ENCODE measurements at regions of chr10 and their contacts with region 1.

Region 1: DNA sequence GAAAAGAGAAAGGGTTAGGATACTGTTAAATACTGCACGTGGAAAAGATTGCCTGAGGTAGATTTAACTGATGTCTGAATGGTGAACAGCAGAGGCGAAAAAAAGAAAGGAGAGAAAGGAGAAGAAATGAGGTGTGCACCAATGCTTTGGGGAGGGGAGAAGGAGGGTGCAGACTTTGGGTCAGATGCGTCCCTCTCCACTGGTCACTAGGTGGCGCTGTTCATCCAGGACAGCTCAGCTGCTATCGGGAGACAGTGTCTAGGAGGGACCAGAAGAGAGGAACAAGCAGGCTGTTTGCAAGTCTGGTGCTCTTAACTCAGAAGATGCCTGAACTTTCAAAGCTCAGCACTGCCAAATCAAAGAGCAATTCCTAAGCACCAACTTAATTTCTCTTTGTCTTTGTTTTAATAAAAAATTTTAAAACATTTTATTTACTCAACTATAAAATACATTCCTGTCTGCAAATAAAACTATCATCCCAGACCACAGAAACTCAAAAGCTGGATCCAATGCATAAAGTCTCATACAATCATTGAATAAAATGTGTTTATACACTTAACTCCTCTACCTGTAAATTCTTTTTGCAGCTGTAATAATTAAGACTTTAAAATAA is 83.9 kb upstream of the PDLIM1 start:
- DNase-seq: peak; percentile 73
- H3K4me3 ChIP-seq: peak overlapping the region in 1 of 2 experiments; percentile 31; a peak in 1 of 4 replicates
- H3K27ac ChIP-seq: no peak overlapping the region
- H3K4me1 ChIP-seq: peaks cover 0 to 8% of the 10 kb centered on the region in 2 experiments; a peak in 2 of 4 replicates
- H3K27me3 ChIP-seq: peaks cover 10% of the 10 kb centered on the region; the same call in 1 of the 2 replicates
- CTCF ChIP-seq: peak; percentile 72
- EP300 ChIP-seq: no peak
- RAD21 ChIP-seq: peak; percentile 96

Region 2: GRCh38 chr10:95388539-95388938 is 13.8 kb after region 1 on chr10:
- CTCF ChIA-PET with region 1: interaction called, 61 read pairs
- POLR2A ChIA-PET with region 1: no interaction called
- DNase-seq: no peak
- H3K4me3 ChIP-seq: no peak overlapping the region
- H3K27ac ChIP-seq: no peak overlapping the region
- H3K4me1 ChIP-seq: no peaks in the 10 kb centered on the region
- H3K27me3 ChIP-seq: no peaks in the 10 kb centered on the region; the same call in 1 of the 2 replicates
- CTCF ChIP-seq: no peak
- EP300 ChIP-seq: no peak
- RAD21 ChIP-seq: no peak

Region 3: GRCh38 chr10:95423164-95424005 is 48.7 kb after region 1 on chr10:
- CTCF ChIA-PET with region 1: interaction called, 88 read pairs
- POLR2A ChIA-PET with region 1: no interaction called
- DNase-seq: no peak
- H3K4me3 ChIP-seq: no peak overlapping the region
- H3K27ac ChIP-seq: no peak overlapping the region
- H3K4me1 ChIP-seq: peaks cover 0 to 14% of the 10 kb centered on the region in 2 experiments; a peak in 2 of 4 replicates
- H3K27me3 ChIP-seq: no peaks in the 10 kb centered on the region
- CTCF ChIP-seq: no peak
- EP300 ChIP-seq: no peak
- RAD21 ChIP-seq: no peak

Region 4: GRCh38 chr10:95440756-95441546 is 66.2 kb after region 1 on chr10:
- CTCF ChIA-PET with region 1: interaction called, 30 read pairs
- POLR2A ChIA-PET with region 1: no interaction called
- DNase-seq: no peak
- H3K4me3 ChIP-seq: no peak overlapping the region
- H3K27ac ChIP-seq: no peak overlapping the region
- H3K4me1 ChIP-seq: peaks cover 4% of the 10 kb centered on the region in 2 experiments; a peak in 2 of 4 replicates
- H3K27me3 ChIP-seq: no peaks in the 10 kb centered on the region
- CTCF ChIP-seq: no peak
- EP300 ChIP-seq: no peak
- RAD21 ChIP-seq: no peak

Region 5: GRCh38 chr10:95478935-95479334 is 104.2 kb after region 1 on chr10:
- CTCF ChIA-PET with region 1: no interaction called
- POLR2A ChIA-PET with region 1: no interaction called
- DNase-seq: no peak
- H3K4me3 ChIP-seq: no peak overlapping the region
- H3K27ac ChIP-seq: no peak overlapping the region
- H3K4me1 ChIP-seq: no peaks in the 10 kb centered on the region; a peak in 1 of 4 replicates
- H3K27me3 ChIP-seq: no peaks in the 10 kb centered on the region
- CTCF ChIP-seq: no peak
- EP300 ChIP-seq: no peak
- RAD21 ChIP-seq: no peak

Region 6: DNA sequence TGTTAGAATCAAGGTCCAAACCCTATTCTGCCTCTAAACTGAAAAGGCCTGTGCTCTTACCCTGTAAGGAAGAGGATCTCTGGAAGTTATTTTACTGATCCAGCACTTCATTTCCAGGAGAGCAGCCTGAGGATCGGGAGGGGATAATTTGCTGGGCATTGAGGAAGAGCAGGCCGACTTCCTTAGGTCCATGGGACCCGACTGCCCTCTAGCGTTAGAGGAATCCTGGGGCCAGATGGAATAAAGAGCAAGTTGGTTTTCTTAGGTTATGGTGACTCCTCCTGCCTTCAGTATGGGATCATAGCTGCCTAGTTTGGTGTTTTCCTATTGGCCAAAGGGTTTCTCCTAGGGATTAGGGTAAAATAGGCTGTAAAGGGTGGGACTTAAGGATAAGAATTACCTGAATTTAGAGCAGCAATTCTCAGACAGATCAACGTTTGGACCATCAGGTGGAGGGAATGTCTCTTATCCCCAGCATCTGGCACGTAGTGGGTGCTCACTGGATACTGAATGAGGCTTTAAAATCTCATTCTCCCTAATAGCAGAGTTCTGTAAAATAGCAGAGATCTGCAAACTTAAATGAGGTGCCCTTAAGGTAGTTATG is 226.5 kb after region 1 on chr10:
- CTCF ChIA-PET with region 1: interaction called, 214 read pairs
- POLR2A ChIA-PET with region 1: interaction called, 3 read pairs
- DNase-seq: peak; percentile 80
- H3K4me3 ChIP-seq: peak overlapping the region in 1 of 2 experiments; percentile 13; a peak in 1 of 4 replicates
- H3K27ac ChIP-seq: no peak overlapping the region
- H3K4me1 ChIP-seq: no peaks in the 10 kb centered on the region
- H3K27me3 ChIP-seq: no peaks in the 10 kb centered on the region
- CTCF ChIP-seq: peak; percentile 96
- EP300 ChIP-seq: no peak
- RAD21 ChIP-seq: peak; percentile 98

Region 7: DNA sequence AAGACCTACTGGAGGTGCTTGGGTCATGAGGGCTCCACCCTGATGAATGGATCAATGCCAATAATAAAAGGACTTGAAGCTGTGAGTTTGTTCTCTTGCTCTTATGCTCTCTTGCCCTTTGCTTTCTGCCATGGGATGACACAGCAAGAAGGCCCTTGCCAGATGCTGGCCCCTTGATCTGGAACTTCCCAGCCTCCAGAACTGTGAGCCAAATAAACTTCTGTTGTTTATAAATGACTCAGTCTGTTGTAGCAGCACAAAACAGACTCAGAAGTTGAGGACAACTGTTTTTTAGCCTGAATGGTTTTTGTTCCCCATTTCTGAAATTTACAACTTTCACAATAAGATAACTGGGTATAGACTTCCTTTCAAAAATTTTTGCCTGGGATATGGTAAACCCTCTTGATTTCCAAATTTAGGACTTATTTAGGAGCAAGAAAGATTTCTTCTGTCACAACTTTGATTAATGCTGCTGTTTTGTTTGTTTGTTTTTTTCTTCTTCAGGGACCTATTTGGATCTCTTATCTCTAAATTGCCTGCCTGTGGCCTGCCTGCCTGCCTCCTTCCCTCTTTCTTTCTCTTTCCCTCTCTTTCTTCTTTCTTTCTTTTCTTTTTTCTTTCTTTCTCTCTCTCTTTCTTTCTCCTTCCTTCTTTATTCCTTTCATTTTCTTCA is 393.3 kb after region 1 on chr10:
- CTCF ChIA-PET with region 1: no interaction called
- POLR2A ChIA-PET with region 1: no interaction called
- DNase-seq: no peak
- H3K4me3 ChIP-seq: no peak overlapping the region
- H3K27ac ChIP-seq: no peak overlapping the region
- H3K4me1 ChIP-seq: no peaks in the 10 kb centered on the region
- H3K27me3 ChIP-seq: no peaks in the 10 kb centered on the region; the same call in 1 of the 2 replicates
- CTCF ChIP-seq: no peak
- EP300 ChIP-seq: no peak
- RAD21 ChIP-seq: no peak

Measured in SK-N-SH (cell line).